Common myeloid progenitor, CD34-positive (primary cell): ENCODE measurements at regions of chr4 and their contacts with region 1.

Region 1: GRCh38 chr4:10018818-10019461 is 2.4 kb downstream of the SLC2A9 start:
- DNase-seq: peak; percentile 96 to 97 (median 97)
- H3K4me3 ChIP-seq: peak overlapping the region in 6 of 7 experiments; percentile 23 to 73 (median 58)
- H3K27ac ChIP-seq: peak overlapping the region in 1 of 2 experiments; percentile 34
- H3K4me1 ChIP-seq: peaks cover 4 to 44% (median 34%) of the 10 kb centered on the region in 4 experiments
- H3K27me3 ChIP-seq: no peaks in the 10 kb centered on the region

Region 2: DNA sequence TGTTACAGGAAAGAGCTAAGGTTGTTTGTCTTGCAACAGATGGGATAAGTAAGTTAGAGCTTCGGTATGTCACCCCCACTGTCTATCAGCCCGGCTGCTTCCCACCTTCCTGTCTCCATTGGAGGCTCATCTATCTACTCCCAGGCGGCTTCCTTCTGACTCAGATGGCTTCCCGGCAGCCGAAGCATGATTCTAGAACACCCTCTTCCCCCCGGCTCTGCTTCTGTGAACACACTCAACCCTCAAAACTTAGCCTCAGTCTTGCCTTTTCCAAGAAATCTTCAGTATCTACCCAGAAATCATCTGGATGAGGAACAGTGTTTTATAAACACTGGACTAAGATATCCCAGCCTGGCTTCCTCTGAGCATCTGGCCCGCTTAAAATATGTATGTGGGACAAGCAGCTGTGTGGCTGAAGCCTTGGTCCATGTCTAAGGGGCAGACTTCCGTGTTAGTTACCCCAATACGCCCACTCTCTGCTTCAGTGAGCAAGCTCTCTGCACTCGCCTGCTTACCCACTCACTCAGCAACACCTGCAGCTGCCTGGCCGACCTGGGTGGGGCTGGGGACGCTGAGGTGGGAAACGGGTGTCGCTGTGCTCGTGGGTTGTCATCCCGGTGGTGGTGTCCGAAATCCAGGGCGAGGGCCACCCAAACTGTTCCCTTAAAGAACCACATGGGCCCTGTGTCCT is 14.4 kb after region 1 on chr4:
- CTCF ChIA-PET with region 1: interaction called, 24 read pairs
- POLR2A ChIA-PET with region 1: no interaction called
- DNase-seq: peak in 2 of 3 donors; percentile 27 to 32
- H3K4me3 ChIP-seq: no peak overlapping the region
- H3K27ac ChIP-seq: no peak overlapping the region
- H3K4me1 ChIP-seq: peaks cover 2 to 17% (median 13%) of the 10 kb centered on the region in 4 experiments
- H3K27me3 ChIP-seq: peaks cover 0 to 2% (median 0%) of the 10 kb centered on the region in 5 experiments

Region 3: GRCh38 chr4:10063544-10064300 is 44.8 kb after region 1 on chr4:
- CTCF ChIA-PET with region 1: interaction called, 32 read pairs
- POLR2A ChIA-PET with region 1: no interaction called
- DNase-seq: peak; percentile 65 to 76 (median 72)
- H3K4me3 ChIP-seq: no peak overlapping the region
- H3K27ac ChIP-seq: no peak overlapping the region
- H3K4me1 ChIP-seq: peaks cover 0 to 6% (median 2%) of the 10 kb centered on the region in 4 experiments
- H3K27me3 ChIP-seq: no peaks in the 10 kb centered on the region

Region 4: DNA sequence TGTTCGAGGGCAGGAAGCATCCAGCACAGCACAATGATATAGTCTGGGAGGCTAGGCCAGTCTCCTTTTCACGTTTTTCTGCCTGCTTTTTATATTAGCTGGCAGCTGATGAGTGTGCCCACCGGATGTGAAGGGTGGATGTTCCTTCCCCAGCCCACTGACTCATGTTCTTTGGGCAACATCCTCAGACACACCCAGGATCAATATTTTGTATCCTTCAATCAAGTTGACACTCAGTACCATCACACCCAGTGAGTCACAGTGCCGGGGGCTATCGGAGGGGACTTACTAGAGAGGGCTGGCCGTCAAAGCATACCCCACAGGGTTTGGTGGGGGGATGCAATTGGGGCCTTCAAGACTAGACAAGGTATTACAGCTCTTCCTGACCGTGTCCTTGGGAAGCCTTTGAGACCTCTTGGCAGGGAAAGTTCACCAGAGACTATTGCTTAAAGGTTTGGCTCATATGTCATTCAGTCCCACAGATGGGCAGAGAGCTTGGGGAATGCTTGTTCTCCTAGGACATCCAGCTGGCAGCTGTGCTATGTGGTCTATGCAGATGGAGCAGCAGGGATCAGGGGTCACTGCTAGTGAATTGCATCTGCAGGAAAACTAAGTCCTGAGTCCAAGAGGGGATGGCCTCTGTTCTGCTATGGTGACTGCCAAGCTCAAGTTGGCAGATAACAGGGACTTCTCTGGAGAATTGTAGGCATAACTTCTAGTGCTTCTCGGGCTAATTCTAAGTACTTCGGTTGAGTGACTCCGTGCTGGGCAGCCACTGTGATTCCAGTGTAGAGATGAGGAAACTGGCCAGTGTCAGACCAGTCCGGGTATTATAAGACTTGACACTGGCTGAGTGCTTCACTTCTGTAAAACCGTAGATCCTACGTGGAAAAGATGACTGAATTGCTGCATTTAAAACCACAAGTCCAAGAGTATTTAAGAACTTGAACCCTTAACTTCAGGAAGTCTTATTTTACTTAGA is 110.5 kb after region 1 on chr4:
- CTCF ChIA-PET with region 1: no interaction called
- POLR2A ChIA-PET with region 1: no interaction called
- DNase-seq: no peak
- H3K4me3 ChIP-seq: no peak overlapping the region
- H3K27ac ChIP-seq: no peak overlapping the region
- H3K4me1 ChIP-seq: peaks cover 0 to 12% (median 5%) of the 10 kb centered on the region in 4 experiments
- H3K27me3 ChIP-seq: no peaks in the 10 kb centered on the region